ENCODE measurements at regions of chrX and their contacts with region 1.

Region 1: GRCh38 chrX:47217642-47218279 is 720 bp upstream of the CDK16 start:
- DNase-seq: peak; percentile 95
- ATAC-seq: peak; percentile 86
- H3K4me3 ChIP-seq: peak overlapping the region; percentile 73 to 82
- H3K27ac ChIP-seq: peak overlapping the region; percentile 95
- H3K4me1 ChIP-seq: peaks cover 6 to 20% of the 10 kb centered on the region in 2 experiments; a peak in 3 of 4 replicates
- H3K27me3 ChIP-seq: no peaks in the 10 kb centered on the region
- CTCF ChIP-seq: no peak
- POLR2A ChIP-seq: no peak
- RAD21 ChIP-seq: no peak

Region 2: DNA sequence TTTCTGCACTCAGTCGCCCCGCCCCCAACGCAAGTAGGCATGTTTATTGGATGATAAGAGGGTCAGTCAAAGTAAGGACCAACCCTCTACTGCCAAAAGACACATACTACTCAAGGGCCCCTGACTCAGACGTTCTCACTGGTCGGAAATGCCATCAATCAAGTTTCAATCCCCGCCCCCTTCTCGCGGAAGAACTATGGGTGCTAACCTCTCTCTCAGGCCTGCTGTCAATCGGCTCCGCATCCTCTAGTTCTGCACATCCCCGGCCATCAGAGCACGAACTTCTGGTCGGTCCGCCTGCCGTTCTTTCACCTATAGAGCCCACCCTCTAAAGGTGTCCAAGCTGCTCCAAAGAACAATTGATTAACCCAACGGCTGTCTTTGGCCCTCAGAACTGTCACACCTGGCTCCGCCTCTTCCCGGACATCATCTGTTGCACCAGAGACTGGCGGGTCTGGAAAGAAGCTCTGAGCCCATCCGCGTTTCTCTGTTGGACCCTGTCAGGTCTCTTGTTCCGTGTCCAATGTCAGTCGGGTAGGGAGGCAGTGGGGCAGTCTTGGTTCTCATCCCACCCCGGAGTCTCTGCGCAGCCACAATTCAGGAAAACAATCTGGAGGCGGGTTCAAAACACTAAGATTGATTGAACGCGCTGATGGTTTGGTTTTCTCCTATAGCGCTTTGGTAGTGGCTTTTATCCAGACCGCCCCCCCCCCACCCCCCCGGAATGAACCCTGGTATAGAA is 88.4 kb before region 1 on chrX:
- CTCF ChIA-PET with region 1: no interaction called
- POLR2A ChIA-PET with region 1: no interaction called
- RAD21 ChIA-PET with region 1: no interaction called
- intact Hi-C with region 1: no loop called
- DNase-seq: peak; percentile 88
- ATAC-seq: peak; percentile 99
- H3K4me3 ChIP-seq: peak overlapping the region; percentile 59 to 65
- H3K27ac ChIP-seq: peak overlapping the region; percentile 47
- H3K4me1 ChIP-seq: 0 out of 4 replicates have a peak, but pooled peaks cover 0 to 2% of the 10 kb centered on the region in 2 experiments
- H3K27me3 ChIP-seq: no peaks in the 10 kb centered on the region
- CTCF ChIP-seq: no peak
- POLR2A ChIP-seq: no peak
- RAD21 ChIP-seq: no peak

Region 3: DNA sequence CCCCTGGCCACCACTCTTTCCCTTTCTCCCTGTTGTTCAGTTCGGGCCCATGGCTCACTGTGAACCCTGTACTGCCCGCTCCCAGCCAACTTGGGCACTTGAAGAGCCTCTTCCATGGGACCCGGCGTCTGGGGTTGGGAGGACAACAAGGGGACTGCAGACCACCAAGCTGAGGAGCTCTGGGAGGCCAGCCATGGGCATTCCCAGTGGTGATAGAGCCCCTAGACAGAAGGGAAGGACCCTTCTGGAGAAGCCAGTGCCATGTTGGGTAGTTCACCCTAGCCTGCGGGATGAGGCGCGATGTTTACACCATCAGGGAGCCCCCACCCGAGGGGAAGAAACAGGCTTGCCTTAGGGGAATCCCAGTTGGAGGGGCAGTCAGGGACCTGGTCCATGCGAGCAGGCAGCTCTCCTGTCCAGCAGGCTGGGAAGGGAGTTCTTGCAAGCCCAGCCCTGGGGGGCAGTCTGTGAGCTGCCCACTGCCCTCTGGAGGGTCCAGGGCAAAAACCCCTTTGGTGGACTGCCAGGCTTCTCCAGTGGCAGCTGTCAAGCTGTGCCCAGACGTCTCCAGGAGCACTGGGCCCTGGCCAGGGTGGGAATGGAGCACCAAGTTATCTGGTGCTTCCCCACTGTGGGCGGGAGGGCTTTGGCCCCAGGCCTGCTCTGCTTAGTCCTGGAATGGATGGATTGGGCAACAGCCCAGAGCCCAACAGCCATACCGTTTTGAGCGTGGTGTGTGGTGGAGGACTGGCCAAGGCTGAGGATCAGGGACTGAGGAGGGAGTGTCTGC is 47.8 kb before region 1 on chrX:
- CTCF ChIA-PET with region 1: no interaction called
- POLR2A ChIA-PET with region 1: no interaction called
- RAD21 ChIA-PET with region 1: no interaction called
- intact Hi-C with region 1: no loop called
- DNase-seq: no peak
- ATAC-seq: no peak
- H3K4me3 ChIP-seq: no peak overlapping the region
- H3K27ac ChIP-seq: no peak overlapping the region
- H3K4me1 ChIP-seq: no peaks in the 10 kb centered on the region
- H3K27me3 ChIP-seq: no peaks in the 10 kb centered on the region
- CTCF ChIP-seq: no peak
- POLR2A ChIP-seq: no peak
- RAD21 ChIP-seq: no peak

Region 4: DNA sequence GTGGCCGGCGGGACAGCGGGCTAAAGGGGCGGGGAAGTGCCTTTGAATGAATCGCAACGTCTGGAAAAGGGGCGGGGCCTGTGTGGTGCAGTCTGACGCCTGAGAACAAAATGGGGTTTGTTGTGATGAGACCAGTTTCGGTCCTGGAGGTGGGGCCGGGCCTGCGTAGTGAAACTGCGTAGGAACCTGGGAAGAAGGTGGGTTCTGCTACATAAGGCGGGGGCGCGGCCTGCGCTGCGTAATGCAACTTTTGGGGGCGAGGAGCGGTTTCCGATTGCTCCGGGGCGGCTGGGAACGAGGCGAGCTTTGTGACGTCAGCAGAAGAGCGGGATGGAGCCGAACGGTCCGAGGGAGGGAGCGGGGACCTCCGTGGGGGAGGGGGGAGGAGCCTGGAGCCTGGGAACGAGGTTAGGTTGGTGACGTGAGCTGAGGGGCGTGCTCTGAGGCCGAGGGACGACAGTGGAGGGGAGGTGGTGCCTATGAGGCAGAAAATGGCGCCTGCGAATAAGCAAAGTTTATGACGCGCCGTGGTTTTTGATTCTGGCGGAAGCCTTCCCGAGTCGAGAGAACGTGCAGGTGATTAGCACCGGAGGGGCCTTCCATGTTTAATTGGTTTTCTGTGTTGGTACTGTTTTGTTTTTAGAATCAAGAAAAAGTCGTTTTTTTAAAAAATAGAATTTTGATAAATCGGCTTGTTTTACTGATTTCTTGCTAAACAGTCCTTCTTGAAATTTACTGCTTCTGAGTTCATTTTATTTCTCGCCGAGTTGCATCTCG is 15.8 kb after region 1 on chrX:
- CTCF ChIA-PET with region 1: no interaction called
- POLR2A ChIA-PET with region 1: interaction called, 13 read pairs
- RAD21 ChIA-PET with region 1: interaction called in 1 of 2 experiments, 3 read pairs
- intact Hi-C with region 1: loop called (anchors 2 kb)
- DNase-seq: peak; percentile 92
- ATAC-seq: peak; percentile 90
- H3K4me3 ChIP-seq: peak overlapping the region; percentile 64 to 67
- H3K27ac ChIP-seq: peak overlapping the region; percentile 90
- H3K4me1 ChIP-seq: peaks cover 3 to 19% of the 10 kb centered on the region in 2 experiments; a peak in 3 of 4 replicates
- H3K27me3 ChIP-seq: no peaks in the 10 kb centered on the region
- CTCF ChIP-seq: no peak
- POLR2A ChIP-seq: no peak
- RAD21 ChIP-seq: no peak

Region 5: DNA sequence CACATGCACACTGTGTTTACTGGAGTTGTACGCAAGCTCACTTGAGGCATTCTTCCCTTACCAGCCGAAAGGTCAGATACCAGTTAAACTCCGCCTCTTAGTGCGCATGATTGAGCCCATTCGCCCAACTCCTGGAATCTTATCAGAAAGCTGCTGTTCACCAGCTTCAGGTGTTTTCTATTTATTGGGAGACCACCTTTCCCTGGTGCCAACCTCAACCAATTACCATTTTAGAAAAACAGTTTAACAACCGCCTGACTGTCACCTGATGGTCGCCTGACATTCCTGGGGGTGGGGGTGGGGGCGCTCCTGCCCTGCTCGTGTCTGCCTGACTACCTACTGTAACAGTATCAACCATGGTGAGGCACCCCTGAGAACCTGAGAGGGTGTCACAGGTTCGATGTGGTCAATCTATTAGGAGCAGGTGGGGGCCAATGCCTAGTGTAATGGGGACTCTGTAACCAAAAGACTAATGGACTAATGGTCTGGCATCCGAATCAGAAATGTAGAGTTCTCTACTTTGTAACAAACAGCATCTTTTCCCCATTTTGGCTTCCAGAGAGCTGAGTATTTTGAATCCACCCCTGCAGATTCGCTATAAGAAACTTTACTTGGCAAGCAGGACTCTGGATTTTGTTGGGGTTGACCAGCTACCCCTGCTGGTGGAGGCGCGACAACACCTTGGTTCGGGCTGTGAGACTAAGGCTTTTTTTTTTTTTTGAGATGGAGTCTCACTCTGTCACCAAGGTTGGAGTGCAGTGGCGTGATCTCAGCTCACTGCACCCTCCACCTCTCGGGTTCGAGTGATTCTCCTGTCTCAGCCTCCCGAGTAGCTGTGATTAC is 94.4 kb after region 1 on chrX:
- CTCF ChIA-PET with region 1: no interaction called
- POLR2A ChIA-PET with region 1: interaction called, 3 read pairs
- RAD21 ChIA-PET with region 1: interaction called in 1 of 2 experiments, 6 read pairs
- intact Hi-C with region 1: loop called (anchors 5 kb)
- DNase-seq: peak; percentile 35
- ATAC-seq: peak; percentile 79
- H3K4me3 ChIP-seq: no peak overlapping the region
- H3K27ac ChIP-seq: no peak overlapping the region
- H3K4me1 ChIP-seq: peaks cover 0 to 4% of the 10 kb centered on the region in 2 experiments; a peak in 2 of 4 replicates
- H3K27me3 ChIP-seq: no peaks in the 10 kb centered on the region
- CTCF ChIP-seq: peak; percentile 22 to 56 (median 53); a peak in 5 of 6 replicates
- POLR2A ChIP-seq: no peak
- RAD21 ChIP-seq: peak; percentile 60

Region 6: DNA sequence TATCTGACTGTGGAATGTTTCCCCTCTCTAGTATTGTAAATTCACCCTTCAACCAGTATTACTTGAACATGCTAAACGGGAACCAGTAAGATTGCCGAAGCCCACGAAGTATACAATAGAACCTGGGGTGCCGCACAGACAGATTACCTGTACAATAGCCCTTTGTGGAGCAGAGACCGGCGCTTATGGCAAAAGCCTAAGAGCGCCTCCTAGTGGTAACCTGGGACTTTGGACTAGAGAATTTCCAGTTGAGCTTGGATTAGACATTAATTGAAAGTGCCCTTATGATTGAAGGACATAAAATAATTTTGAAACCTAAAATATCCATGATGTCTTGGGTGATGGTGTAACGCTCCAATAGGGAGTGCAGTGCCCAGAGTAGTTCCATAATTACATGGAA is 166.7 kb after region 1 on chrX:
- CTCF ChIA-PET with region 1: interaction called, 7 read pairs
- POLR2A ChIA-PET with region 1: interaction called, 3 read pairs
- RAD21 ChIA-PET with region 1: no interaction called
- intact Hi-C with region 1: loop called (anchors 2 kb)
- DNase-seq: peak; percentile 61
- ATAC-seq: peak; percentile 90
- H3K4me3 ChIP-seq: no peak overlapping the region
- H3K27ac ChIP-seq: no peak overlapping the region
- H3K4me1 ChIP-seq: peaks cover 0 to 6% of the 10 kb centered on the region in 2 experiments; a peak in 2 of 4 replicates
- H3K27me3 ChIP-seq: no peaks in the 10 kb centered on the region
- CTCF ChIP-seq: peak; percentile 61 to 71 (median 71); a peak in 5 of 6 replicates
- POLR2A ChIP-seq: no peak
- RAD21 ChIP-seq: peak; percentile 82

Measured in HCT116 (cell line).